Heart right ventricle (tissue), 16 donors: ENCODE measurements at regions of chr10 and their contacts with region 1.

Region 1: GRCh38 chr10:112183329-112184051 is at the start of gene GPAM:
- DNase-seq: peak; percentile 93 to 96
- ATAC-seq: peak; percentile 96 to 99 (median 98)
- H3K4me3 ChIP-seq: peak within 1 kb of the TSS; percentile 73 to 100 (median 88)
- H3K27ac ChIP-seq: peak within 1 kb of the TSS in 9 of 10 donors; percentile 70 to 85 (median 78)
- H3K4me1 ChIP-seq: peaks cover 4 to 33% (median 19%) of the 10 kb centered on the region in 9 donors
- H3K27me3 ChIP-seq: no peaks in the 10 kb centered on the region
- CTCF ChIP-seq: peak in 1 of 9 donors; percentile 7
- total RNA-seq, gene GPAM: 12.2 to 36.6 (median 20.9) TPM

Region 2: GRCh38 chr10:110344622-110345021 is 1838.9 kb before region 1 on chr10:
- intact Hi-C with region 1: no loop called
- DNase-seq: no peak
- ATAC-seq: no peak
- H3K4me3 ChIP-seq: no peak overlapping the region
- H3K27ac ChIP-seq: no peak overlapping the region
- H3K4me1 ChIP-seq: no peaks in the 10 kb centered on the region
- H3K27me3 ChIP-seq: peaks cover 0 to 8% (median 0%) of the 10 kb centered on the region in 7 donors
- CTCF ChIP-seq: no peak

Region 3: DNA sequence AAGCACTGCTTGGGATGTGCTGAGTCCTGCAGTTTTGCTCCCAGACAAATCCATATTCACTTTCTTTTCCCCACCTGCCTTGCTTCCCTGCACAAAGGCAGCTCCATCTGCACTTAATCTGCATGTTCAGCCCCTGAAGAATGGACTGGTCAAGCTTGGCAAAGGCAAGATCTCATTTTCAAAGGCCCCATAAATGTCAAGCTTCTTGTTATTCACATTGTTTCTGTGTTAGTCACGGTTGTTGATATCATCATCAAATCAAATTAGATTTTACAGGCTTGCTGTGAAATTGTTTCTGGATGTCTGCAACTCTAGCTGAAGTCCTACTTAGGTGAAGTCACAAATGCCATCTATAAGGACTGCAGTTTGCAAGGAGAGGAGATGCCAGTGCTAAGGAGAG is 91.0 kb before region 1 on chr10:
- intact Hi-C with region 1: no loop called
- DNase-seq: no peak
- ATAC-seq: no peak
- H3K4me3 ChIP-seq: no peak overlapping the region
- H3K27ac ChIP-seq: no peak overlapping the region
- H3K4me1 ChIP-seq: no peaks in the 10 kb centered on the region
- H3K27me3 ChIP-seq: peaks cover 0 to 5% (median 0%) of the 10 kb centered on the region in 7 donors
- CTCF ChIP-seq: no peak

Region 4: GRCh38 chr10:112295853-112296830 is 112.7 kb after region 1 on chr10:
- intact Hi-C with region 1: loop called in 5 of 10 experiments (anchors 2 to 10 kb)
- DNase-seq: peak; percentile 54 to 69
- ATAC-seq: peak; percentile 83 to 96 (median 93)
- H3K4me3 ChIP-seq: no peak overlapping the region
- H3K27ac ChIP-seq: peak overlapping the region in 7 of 10 donors; percentile 16 to 77 (median 39)
- H3K4me1 ChIP-seq: peaks cover 0 to 27% (median 18%) of the 10 kb centered on the region in 9 donors
- H3K27me3 ChIP-seq: no peaks in the 10 kb centered on the region
- CTCF ChIP-seq: peak in 1 of 9 donors; percentile 9

Region 5: GRCh38 chr10:112307358-112308124 is 124.1 kb after region 1 on chr10:
- intact Hi-C with region 1: loop called in 9 of 10 experiments (anchors 5 to 10 kb)
- DNase-seq: no peak
- ATAC-seq: peak in 5 of 8 donors; percentile 49 to 71 (median 63)
- H3K4me3 ChIP-seq: no peak overlapping the region
- H3K27ac ChIP-seq: no peak overlapping the region
- H3K4me1 ChIP-seq: no peaks in the 10 kb centered on the region
- H3K27me3 ChIP-seq: peaks cover 0 to 8% (median 0%) of the 10 kb centered on the region in 7 donors
- CTCF ChIP-seq: peak; percentile 40 to 76 (median 70)

Region 6: GRCh38 chr10:112434988-112435619 is 251.6 kb after region 1 on chr10:
- intact Hi-C with region 1: loop called in 4 of 10 experiments (anchors 5 to 10 kb)
- DNase-seq: no peak
- ATAC-seq: no peak
- H3K4me3 ChIP-seq: no peak overlapping the region
- H3K27ac ChIP-seq: no peak overlapping the region
- H3K4me1 ChIP-seq: no peaks in the 10 kb centered on the region
- H3K27me3 ChIP-seq: no peaks in the 10 kb centered on the region
- CTCF ChIP-seq: peak in 7 of 9 donors; percentile 38 to 68 (median 52)

Region 7: GRCh38 chr10:112446855-112447711 is 263.6 kb after region 1 on chr10 and contains the starts of genes VTI1A and ZDHHC6:
- intact Hi-C with region 1: loop called in 1 of 10 experiments (anchors 5 kb)
- DNase-seq: peak; percentile 85
- ATAC-seq: peak; percentile 96 to 100 (median 98)
- H3K4me3 ChIP-seq: peak within 1 kb of the TSS; percentile 60 to 98 (median 78)
- H3K27ac ChIP-seq: peak within 1 kb of the TSS; percentile 85 to 95 (median 90)
- H3K4me1 ChIP-seq: peaks cover 5 to 38% (median 27%) of the 10 kb centered on the region in 9 donors
- H3K27me3 ChIP-seq: no peaks in the 10 kb centered on the region
- CTCF ChIP-seq: peak in 3 of 9 donors; percentile 43 to 49 (median 43)
- total RNA-seq, gene VTI1A: 15.7 to 24.5 (median 21.1) TPM
- total RNA-seq, gene ZDHHC6: 11.0 to 19.3 (median 15.2) TPM